ENCODE measurements at regions of chr18 and their contacts with region 1.

Region 1: DNA sequence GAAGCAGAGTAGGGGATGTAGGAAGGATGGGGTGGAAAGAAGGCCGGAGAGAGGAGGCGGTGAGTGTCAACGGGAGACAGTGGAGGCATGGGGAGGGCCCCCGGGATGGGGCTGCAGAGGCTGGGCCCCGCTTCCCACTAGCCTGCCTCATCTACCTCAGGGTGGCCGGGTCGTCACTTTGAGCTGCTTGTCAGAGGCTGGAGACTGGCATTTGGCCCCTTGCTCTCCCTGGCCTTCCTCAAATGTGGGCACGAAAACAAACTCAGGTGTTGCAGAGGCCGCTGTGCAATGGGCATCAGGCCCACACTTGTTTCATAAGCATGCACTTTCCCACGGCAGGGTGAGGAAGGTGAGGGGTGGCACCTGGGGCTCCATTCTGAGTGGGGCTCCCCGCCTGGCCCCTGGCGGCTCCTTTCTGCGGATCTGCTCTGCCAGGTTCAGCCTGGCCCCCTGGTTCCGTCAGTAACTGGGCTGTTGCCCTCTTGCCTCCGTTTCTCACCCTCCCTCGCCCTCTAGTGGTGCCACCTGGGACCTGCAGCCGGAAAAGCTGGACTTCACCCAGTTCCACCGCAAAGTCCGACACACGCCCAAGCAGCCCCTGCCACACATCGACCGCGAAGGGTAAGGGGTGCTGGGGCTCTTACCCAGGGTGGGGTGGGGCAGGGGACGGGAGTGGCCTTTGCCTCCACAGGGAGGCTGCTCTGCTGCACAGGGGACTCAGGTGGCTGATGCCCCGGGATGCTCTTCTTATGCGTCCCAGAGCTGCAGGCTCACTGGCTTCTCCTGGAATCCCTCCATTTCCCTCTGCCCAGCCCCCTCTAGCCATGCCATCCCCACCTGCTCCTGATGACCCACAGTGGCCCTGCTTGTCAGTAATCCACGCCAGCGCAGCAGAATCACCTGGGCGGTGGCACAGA is 125.4 kb downstream of the CTIF start:
- DNase-seq: peak; percentile 62 to 85 (median 78)
- H3K4me3 ChIP-seq: no peak overlapping the region
- H3K27ac ChIP-seq: no peak overlapping the region
- H3K4me1 ChIP-seq: peaks cover 11% of the 10 kb centered on the region
- H3K27me3 ChIP-seq: no peaks in the 10 kb centered on the region
- CTCF ChIP-seq: peak; percentile 63 to 70 (median 65)
- EP300 ChIP-seq: no peak
- POLR2A ChIP-seq: no peak

Region 2: GRCh38 chr18:48470484-48471180 is 193.6 kb before region 1 on chr18:
- intact Hi-C with region 1: loop called (anchors 2 to 5 kb)
- DNase-seq: no peak
- H3K4me3 ChIP-seq: no peak overlapping the region
- H3K27ac ChIP-seq: no peak overlapping the region
- H3K4me1 ChIP-seq: peaks cover 2% of the 10 kb centered on the region
- H3K27me3 ChIP-seq: no peaks in the 10 kb centered on the region
- CTCF ChIP-seq: no peak
- EP300 ChIP-seq: no peak
- POLR2A ChIP-seq: no peak

Region 3: DNA sequence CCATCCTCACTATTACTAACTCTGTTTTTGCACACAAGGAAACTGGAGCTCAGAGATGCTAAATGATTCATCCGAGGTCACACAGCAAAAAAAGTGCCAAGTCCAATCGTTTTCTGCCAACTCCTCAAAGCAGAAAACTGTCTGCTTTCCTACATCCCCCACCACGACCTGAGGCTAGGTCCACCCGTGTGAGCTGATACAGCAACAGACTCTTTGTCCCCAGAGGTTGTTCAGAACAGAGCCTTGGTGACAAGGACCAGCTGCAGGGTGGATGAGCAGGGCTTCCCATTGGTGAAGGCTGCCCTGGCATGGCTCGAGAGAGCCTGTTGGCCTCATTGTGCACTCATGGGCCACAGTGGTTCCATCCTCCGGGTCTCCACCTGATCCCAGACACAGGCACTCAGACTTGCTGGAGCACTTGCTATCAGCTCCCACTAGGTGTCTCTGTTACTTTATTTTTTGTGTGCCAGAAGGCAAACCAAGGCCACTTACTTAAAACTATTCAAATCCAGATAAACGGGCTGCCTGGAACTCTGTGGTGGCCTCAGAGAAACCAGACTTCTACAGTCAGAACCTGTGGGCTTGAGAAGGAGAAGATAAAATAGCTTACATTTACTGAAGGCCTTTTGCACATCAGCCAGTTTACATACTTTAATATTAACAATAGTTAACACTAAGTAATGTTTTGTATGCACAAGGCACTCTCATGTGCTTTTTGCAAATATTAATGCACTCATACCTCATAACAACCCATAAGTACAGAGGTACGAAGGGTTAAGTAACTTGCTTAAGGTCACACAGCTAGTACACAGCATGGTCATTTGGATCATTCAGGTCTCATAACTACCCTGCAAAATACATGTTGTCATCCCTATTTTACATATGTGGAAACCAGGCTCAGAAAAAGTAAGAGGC is 188.3 kb before region 1 on chr18:
- intact Hi-C with region 1: loop called (anchors 2 to 5 kb)
- DNase-seq: peak; percentile 46 to 67 (median 57)
- H3K4me3 ChIP-seq: no peak overlapping the region
- H3K27ac ChIP-seq: no peak overlapping the region
- H3K4me1 ChIP-seq: no peaks in the 10 kb centered on the region
- H3K27me3 ChIP-seq: no peaks in the 10 kb centered on the region
- CTCF ChIP-seq: peak; percentile 71 to 85 (median 74)
- EP300 ChIP-seq: no peak
- POLR2A ChIP-seq: no peak

Region 4: DNA sequence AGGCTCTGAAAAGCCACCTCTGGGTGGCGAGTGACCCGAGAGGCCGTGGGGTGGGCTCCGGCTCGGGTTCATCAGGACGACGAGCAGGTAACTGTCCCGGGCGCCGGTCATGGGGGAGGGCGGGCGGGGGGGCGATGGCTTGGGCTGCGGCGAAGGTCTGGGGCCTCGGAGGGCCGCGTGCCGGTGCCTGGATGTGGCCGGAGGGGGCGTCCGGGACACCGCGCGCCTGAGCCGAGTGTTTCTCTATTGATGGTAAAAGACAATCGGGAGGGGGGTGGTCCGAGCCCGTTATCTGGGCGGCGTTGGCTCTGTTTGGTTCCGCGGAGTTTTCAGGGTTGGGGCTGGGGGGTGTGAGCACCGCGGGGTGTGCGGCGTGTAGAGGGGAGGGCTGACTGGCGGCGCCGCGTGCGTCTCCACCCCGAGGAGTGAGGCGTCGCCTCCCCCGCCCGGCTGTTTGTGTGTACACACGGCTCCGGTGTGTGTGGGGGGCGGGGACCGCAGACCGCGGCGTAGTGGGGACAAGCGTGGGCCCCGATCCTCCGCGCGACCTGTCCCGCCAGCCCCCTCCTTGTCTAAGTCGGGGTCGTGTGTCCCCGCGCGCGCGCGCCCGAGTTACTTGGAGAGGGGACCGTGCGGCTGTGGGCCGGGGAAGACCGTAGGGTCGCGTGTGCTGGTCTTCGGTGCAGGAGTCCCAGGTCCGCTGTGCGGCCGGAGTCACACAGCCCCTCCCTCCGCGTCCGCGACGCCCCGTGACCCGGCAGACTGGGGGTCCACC is 123.8 kb before region 1 on chr18:
- intact Hi-C with region 1: loop called in 1 of 4 experiments (anchors 5 kb)
- DNase-seq: peak; percentile 66 to 81 (median 75)
- H3K4me3 ChIP-seq: peak overlapping the region; percentile 75
- H3K27ac ChIP-seq: peak overlapping the region; percentile 72 to 83
- H3K4me1 ChIP-seq: peaks cover 12% of the 10 kb centered on the region
- H3K27me3 ChIP-seq: no peaks in the 10 kb centered on the region
- CTCF ChIP-seq: no peak
- EP300 ChIP-seq: no peak
- POLR2A ChIP-seq: no peak

Region 5: DNA sequence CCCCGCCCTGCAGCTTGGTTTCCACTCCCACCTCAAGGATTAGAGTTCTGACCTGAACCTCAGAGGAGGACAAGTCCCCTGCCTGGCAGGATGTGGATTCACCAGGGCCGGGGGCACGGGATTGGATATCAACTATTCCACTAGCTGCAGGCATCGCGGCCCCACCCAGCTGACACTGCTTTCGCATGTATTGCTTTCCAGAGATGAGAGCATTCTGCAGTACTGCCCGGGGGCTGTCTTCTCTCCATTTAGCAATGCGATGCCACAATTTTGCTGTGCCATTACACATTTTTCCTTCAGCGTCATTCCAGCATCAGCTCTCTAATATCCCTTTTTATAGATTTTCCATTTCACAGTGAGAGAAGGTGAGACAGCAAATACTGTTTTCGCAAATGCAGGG is 83.4 kb before region 1 on chr18:
- intact Hi-C with region 1: no loop called
- DNase-seq: no peak
- H3K4me3 ChIP-seq: no peak overlapping the region
- H3K27ac ChIP-seq: no peak overlapping the region
- H3K4me1 ChIP-seq: peaks cover 23% of the 10 kb centered on the region
- H3K27me3 ChIP-seq: no peaks in the 10 kb centered on the region
- CTCF ChIP-seq: no peak
- EP300 ChIP-seq: no peak
- POLR2A ChIP-seq: no peak

Region 6: GRCh38 chr18:48742706-48743475 is 78.7 kb after region 1 on chr18:
- intact Hi-C with region 1: no loop called
- DNase-seq: peak; percentile 65 to 71 (median 69)
- H3K4me3 ChIP-seq: no peak overlapping the region
- H3K27ac ChIP-seq: peak overlapping the region in 1 of 2 donors; percentile 51
- H3K4me1 ChIP-seq: peaks cover 19% of the 10 kb centered on the region
- H3K27me3 ChIP-seq: no peaks in the 10 kb centered on the region
- CTCF ChIP-seq: no peak
- EP300 ChIP-seq: no peak
- POLR2A ChIP-seq: no peak